ENCODE measurements at regions of chr17 and their contacts with region 1.

Region 1: DNA sequence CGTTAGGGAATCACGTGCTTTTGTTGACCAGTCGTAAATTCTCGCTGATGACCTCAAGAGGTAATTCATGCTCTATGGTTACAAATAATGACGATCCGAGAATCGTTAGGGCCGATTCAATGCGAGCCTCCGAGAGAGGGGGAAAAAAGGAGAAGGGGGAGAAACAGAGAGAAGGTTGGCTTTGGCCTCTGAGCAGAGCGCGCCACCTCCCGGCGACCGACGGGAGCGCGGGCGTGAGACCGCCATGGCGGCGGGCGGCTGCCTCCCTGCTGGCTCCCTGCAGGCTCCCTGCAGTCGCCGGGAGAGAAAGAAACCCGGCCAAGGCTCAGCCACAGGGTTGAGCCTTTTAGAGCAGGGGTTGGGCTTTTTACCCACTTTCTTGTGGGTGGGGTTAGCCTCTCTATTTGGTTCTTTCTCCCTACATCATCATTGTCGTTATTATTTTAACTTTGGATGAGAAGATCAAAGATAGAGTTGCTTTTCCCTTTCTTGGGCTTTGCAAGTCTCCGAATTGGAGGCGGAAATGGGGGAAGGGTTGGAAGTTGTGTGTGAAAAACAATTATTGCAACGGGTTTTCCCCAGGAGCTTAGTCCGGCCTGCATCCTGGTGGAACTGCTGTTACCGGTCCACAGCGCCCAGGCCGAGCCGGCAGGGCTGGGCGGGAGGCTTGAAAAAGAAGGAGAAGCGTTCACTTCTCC is 410 bp upstream of the HOXB5 start:
- DNase-seq: peak; percentile 88
- H3K4me3 Mint-ChIP-seq: peak overlapping the region; percentile 72
- H3K27ac Mint-ChIP-seq: no peak overlapping the region
- H3K4me1 Mint-ChIP-seq: peaks cover 31% of the 10 kb centered on the region
- H3K27me3 Mint-ChIP-seq: peaks cover 73% of the 10 kb centered on the region

Region 2: GRCh38 chr17:48307814-48308411 is 286.1 kb before region 1 on chr17:
- CTCF ChIA-PET with region 1: interaction called, 22 read pairs
- POLR2A ChIA-PET with region 1: no interaction called
- intact Hi-C with region 1: loop called (anchors 1 kb)
- DNase-seq: peak; percentile 66
- H3K4me3 Mint-ChIP-seq: no peak overlapping the region
- H3K27ac Mint-ChIP-seq: no peak overlapping the region
- H3K4me1 Mint-ChIP-seq: peaks cover 11% of the 10 kb centered on the region
- H3K27me3 Mint-ChIP-seq: no peaks in the 10 kb centered on the region

Region 3: GRCh38 chr17:48335858-48336500 is 258.0 kb before region 1 on chr17:
- CTCF ChIA-PET with region 1: interaction called, 94 read pairs
- POLR2A ChIA-PET with region 1: no interaction called
- intact Hi-C with region 1: loop called (anchors 2 kb)
- DNase-seq: no peak
- H3K4me3 Mint-ChIP-seq: no peak overlapping the region
- H3K27ac Mint-ChIP-seq: no peak overlapping the region
- H3K4me1 Mint-ChIP-seq: peaks cover 8% of the 10 kb centered on the region
- H3K27me3 Mint-ChIP-seq: no peaks in the 10 kb centered on the region

Region 4: DNA sequence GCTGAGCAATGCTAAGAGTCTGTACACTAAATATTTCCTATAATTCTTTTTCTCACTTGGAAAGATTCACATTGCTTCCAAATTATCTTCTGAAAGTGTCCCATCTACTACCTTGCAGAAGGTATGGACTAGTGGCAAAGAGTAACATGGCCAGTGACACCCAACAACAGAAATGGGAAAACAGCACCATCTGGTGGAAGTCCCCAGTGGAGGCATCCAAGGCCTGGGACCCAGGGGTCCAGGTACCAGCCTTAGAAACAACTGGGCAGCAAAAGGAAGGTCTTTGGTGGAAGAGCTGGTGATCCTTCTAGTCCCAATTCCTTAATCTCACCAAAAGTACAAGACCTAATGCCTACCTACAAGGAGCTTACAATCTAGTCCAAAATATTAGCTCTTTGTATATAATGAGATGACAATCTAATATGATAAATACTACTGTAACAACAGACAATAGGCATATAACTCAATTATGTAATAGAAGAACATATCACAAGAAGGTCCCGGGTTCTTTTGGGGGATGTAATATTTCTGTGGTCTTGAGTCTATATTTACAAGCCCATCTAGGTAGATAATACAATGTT is 219.2 kb before region 1 on chr17:
- CTCF ChIA-PET with region 1: interaction called, 10 read pairs
- POLR2A ChIA-PET with region 1: no interaction called
- intact Hi-C with region 1: no loop called
- DNase-seq: peak; percentile 51
- H3K4me3 Mint-ChIP-seq: no peak overlapping the region
- H3K27ac Mint-ChIP-seq: no peak overlapping the region
- H3K4me1 Mint-ChIP-seq: peaks cover 26% of the 10 kb centered on the region
- H3K27me3 Mint-ChIP-seq: no peaks in the 10 kb centered on the region

Region 5: DNA sequence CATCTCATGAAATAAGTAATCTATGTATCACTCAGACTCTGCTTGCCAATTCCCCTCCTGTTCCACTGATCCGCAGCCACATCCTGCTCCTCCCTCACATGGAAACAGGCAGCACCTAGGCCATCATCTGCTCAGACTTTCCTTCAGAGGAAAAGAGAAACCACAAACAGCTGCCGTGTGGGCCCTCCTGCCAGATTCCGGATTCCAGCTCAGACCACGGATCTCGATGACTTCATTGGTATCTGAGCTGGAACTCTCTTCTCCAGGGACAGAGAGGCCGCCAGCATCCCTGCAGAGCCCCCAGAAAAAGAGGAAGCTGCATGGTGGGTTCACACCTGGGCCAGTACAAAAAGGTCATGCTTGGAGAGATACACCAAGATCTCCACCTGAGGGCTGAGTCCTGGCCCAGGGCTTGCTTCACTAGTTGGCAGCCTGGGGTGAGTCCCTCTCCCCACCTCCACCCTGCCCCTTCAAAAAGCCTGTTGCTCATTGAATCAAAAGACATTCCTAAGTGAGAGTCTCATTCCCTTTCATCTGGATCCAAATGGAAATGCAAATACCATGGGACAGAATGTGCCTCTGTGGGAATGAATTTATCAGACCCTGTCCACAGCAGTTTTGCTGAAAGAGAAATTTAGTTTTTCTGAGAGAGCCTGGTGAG is 110.4 kb before region 1 on chr17:
- CTCF ChIA-PET with region 1: interaction called, 10 read pairs
- POLR2A ChIA-PET with region 1: no interaction called
- intact Hi-C with region 1: no loop called
- DNase-seq: peak; percentile 67
- H3K4me3 Mint-ChIP-seq: no peak overlapping the region
- H3K27ac Mint-ChIP-seq: peak overlapping the region; percentile 30
- H3K4me1 Mint-ChIP-seq: peaks cover 22% of the 10 kb centered on the region
- H3K27me3 Mint-ChIP-seq: peaks cover 6% of the 10 kb centered on the region

Region 6: DNA sequence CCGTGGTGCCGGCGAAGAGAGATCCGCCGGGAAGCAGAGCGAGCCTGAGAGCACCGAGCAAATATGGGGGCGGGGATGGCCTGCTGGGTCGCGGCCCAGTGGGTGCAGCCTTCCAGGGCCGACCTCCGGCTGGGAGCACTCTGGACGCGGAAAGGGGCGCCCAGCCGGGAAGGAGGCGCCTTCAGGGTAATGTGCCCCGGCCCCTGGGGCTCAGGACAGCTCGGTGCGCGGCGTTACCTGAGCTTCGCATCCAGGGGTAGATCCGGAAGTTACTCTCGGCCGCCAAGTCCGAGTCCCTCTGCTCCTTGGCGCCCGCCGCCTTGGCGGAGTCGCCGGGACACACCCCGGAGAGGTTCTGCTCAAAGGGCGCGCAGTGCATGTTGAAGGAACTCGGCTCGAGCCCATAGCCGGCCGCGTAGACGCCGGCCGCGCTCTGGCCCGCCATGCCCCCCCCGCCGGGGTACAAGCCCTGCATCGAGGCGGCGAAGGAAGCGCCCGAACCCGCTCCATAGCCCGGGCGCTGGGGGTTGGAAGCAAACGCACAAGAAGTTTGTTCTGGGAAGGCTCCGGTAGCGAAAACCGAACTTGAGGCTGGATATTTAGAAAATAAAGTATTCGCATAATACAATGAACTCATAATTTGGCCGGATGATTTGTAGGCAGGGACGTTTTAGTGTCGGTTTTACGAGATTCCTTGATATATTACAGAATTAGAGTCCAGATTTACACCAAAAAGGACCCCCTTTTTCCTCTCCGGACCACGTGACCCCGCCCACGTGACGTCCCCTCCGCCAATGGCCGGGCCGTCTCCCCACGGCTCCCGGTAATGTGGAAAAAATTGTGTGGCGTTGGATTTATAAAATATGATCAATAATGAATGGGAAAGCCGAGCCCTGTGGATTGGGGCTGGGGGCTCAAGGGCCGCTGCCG is 16.6 kb after region 1 on chr17 and contains the start of gene HOXB7:
- CTCF ChIA-PET with region 1: interaction called, 22 read pairs
- POLR2A ChIA-PET with region 1: no interaction called
- intact Hi-C with region 1: loop called (anchors 2 kb)
- DNase-seq: peak; percentile 78
- H3K4me3 Mint-ChIP-seq: peak within 1 kb of the TSS; percentile 86
- H3K27ac Mint-ChIP-seq: peak within 1 kb of the TSS; percentile 41
- H3K4me1 Mint-ChIP-seq: peaks cover 37% of the 10 kb centered on the region
- H3K27me3 Mint-ChIP-seq: peaks cover 64% of the 10 kb centered on the region
- total RNA-seq, gene HOXB7: 0.36 to 0.44 TPM

Measured in activated CD4-positive, alpha-beta memory T cell treated with anti-CD3 and anti-CD28 coated beads for 36 hours (primary cell).